ENCODE measurements at regions of chr3 and their contacts with region 1.

Region 1: GRCh38 chr3:94004301-94004910 is 24.0 kb downstream of the STX19 start:
- DNase-seq: no peak
- H3K4me3 ChIP-seq: peak overlapping the region in 1 of 3 donors; percentile 40
- H3K27ac ChIP-seq: peak overlapping the region in 1 of 3 donors; percentile 39
- H3K4me1 ChIP-seq: no peaks in the 10 kb centered on the region
- H3K27me3 ChIP-seq: no peaks in the 10 kb centered on the region
- CTCF ChIP-seq: peak; percentile 21 to 79 (median 68)
- POLR2A ChIP-seq: no peak

Region 2: DNA sequence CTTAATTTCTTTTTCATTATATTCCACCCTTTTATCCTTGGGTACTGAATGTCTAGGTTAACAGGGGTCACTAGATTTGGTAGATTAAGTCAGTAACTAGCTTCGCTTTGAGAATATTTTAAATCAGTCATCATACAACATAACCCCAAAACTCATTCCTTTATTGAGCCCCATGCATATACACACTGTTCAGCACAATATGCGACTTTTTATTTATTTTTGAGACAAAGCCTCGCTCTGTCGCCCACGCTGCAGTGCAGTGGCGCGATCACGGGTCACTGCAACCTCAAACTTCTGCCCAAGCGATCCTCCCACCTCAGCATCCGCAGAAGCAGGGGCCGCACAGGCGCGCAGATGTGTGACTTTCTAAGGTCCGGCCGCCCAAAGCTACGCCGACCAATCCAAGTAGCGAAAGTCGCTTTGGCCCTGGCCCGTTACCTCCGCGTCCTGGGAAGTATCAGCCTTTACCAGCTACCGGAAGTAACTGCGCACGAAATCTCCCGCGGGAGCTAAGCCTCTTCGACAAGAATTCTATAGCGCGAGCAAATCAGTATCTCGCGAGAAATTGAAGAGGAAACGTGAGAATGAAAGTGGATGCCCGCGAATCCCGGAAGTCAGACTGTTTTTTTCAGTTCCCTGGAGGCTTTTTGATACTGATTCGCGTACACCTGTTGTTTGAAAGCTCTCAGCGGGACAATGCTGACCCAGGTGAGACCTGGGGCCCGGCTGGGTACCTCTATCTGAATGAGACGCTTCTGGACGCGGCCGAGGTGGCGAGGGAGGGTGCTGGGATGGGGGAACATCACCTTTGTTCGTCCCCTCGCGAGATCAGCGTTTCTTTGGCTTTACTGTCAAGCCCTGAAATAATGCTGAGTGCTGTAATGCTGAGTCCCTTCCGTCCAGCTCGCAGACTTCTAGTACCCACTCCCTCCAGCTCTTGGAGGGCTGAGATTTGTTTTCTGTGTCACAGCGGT is 58.3 kb after region 1 on chr3 and contains the starts of genes DHFR2 and NSUN3:
- intact Hi-C with region 1: loop called (anchors 10 kb)
- DNase-seq: peak; percentile 92
- H3K4me3 ChIP-seq: peak within 1 kb of the TSS; percentile 50 to 61 (median 58)
- H3K27ac ChIP-seq: peak within 1 kb of the TSS; percentile 70 to 95 (median 86)
- H3K4me1 ChIP-seq: peaks cover 8 to 11% of the 10 kb centered on the region in 2 donors
- H3K27me3 ChIP-seq: no peaks in the 10 kb centered on the region
- CTCF ChIP-seq: no peak
- POLR2A ChIP-seq: peak in 1 of 2 donors; percentile 69
- total RNA-seq, gene DHFR2: 5.5 to 7.7 (median 6.4) TPM
- total RNA-seq, gene NSUN3: 12.5 to 22.5 (median 15.4) TPM

Region 3: DNA sequence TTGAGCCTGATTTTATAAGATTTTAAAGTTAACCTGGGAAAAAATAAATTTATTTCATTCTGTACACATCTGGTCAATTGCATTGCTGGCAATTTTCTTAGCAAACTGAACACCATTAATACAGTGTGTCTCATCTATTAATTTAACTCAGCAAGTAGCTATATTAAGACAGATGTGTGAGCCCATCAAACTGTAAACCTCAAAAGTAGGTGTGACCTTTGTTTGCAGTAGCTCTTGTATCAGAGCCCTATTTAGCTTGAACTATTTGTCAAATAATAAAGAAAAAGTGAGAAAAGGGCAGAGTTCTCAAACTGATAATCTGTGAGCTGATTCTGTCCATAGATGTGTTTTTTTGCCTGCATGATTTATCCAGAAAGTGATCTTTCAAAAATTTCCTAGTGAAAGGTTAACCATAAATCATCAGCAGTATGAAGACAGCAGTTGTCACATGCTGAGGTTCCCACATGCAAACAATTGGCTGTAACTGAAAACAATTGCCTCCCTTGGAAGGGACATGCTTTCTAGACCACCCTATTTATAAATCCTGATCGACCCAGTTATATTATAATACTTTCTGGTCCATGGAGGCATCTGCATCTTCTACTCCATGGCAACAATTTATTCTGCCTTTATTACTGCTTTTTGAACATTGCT is 705.0 kb after region 1 on chr3:
- intact Hi-C with region 1: no loop called
- DNase-seq: no peak
- H3K4me3 ChIP-seq: no peak overlapping the region
- H3K27ac ChIP-seq: no peak overlapping the region
- H3K4me1 ChIP-seq: no peaks in the 10 kb centered on the region
- H3K27me3 ChIP-seq: no peaks in the 10 kb centered on the region
- CTCF ChIP-seq: no peak
- POLR2A ChIP-seq: no peak

Measured in thyroid gland (tissue), 4 donors.